ENCODE measurements at regions of chr12 and their contacts with region 1.

Region 1: DNA sequence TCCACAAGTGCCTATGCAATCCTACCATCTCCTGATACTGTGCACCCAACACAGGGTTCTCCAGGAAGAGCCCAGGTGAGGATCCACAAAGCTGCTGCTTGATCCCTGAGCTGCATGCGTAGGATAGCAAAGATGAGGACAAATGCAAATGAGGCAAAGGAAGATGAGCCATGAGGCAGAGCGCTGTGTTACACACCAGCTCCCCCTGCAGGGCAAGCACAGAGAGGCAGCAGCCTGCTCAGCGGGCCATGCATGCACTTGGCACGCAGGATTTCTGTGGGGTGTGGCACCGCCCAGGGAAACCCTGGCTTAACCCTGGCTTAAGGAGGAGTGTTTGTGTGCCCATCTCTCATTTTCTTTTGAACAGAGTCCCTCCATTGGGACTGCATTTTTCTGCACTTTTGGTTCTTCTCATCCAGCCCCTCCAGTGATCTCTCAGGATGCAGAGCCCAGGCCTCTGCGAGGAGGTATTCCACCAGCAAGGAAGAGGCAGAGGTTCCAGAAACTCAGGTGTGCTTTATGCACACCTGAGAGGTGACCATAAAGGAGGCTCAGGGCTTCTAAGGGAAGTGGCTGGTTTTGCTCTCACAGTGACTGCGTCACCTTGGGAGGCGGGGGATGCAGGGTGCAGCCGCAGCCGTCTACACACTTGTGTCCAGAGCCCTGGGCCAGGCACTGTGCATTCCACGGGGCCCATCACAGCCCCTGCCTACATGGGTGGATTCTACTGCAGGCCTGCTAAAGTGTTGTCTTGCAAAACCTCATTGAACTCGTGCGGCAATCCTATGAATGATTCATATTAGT is 973.3 kb upstream of the TMEM132C start:
- DNase-seq: peak in 6 of 9 donors; percentile 5 to 44 (median 10)
- ATAC-seq: peak; percentile 56
- H3K4me3 ChIP-seq: no peak overlapping the region
- H3K4me3 Mint-ChIP-seq: no peak overlapping the region
- H3K27ac ChIP-seq: no peak overlapping the region
- H3K27ac Mint-ChIP-seq: no peak overlapping the region
- H3K4me1 ChIP-seq: no peaks in the 10 kb centered on the region
- H3K4me1 Mint-ChIP-seq: no peaks in the 10 kb centered on the region
- H3K27me3 ChIP-seq: no peaks in the 10 kb centered on the region
- H3K27me3 Mint-ChIP-seq: peaks cover 0 to 29% (median 3%) of the 10 kb centered on the region in 5 donors

Region 2: DNA sequence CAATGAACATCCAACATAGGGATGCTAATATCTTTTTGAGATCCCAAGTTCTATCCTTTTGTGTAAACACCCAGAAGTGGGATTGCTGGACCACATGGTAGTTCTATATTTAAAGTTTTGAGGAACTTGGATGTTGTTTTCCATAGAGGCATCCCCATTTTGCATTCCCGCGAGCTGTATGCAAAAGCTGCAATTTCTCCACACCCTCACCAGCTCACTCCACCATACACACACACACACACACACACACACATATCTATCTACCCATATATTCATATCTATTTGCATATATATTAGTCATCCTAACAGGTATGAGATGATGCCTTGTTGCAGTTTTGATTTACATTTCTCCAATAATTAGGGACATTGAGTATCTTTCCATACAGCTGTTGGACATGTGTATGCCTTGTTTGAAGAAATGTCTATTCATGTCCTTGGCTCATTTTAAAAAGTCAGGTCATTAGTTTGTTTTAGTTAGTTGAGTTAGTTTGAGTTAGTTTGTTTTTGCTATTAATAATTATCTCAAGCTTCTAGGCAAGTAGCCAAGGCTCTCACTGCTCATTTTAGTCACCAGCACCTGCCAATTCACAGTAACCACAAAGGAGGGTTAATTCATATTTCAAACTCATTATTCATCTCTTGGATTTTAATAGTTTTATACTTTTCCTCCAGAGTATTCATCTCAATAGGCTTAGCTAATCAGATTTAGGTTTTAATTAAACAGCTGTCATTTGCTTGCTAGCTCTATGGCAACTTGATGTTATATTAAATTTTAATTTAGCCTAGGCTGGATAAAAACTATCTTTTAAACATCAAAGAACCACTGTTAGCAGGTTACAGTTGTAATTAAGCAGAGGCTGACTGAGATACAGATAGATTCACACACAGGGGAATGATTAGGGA is 462.7 kb before region 1 on chr12:
- CTCF ChIA-PET with region 1: no interaction called
- POLR2A ChIA-PET with region 1: no interaction called
- intact Hi-C with region 1: no loop called
- DNase-seq: no peak
- ATAC-seq: no peak
- H3K4me3 ChIP-seq: no peak overlapping the region
- H3K4me3 Mint-ChIP-seq: no peak overlapping the region
- H3K27ac ChIP-seq: no peak overlapping the region
- H3K27ac Mint-ChIP-seq: no peak overlapping the region
- H3K4me1 ChIP-seq: no peaks in the 10 kb centered on the region
- H3K4me1 Mint-ChIP-seq: peaks cover 0 to 2% (median 0%) of the 10 kb centered on the region in 7 donors
- H3K27me3 ChIP-seq: peaks cover 0 to 2% of the 10 kb centered on the region in 2 donors
- H3K27me3 Mint-ChIP-seq: peaks cover 2 to 28% (median 22%) of the 10 kb centered on the region in 5 donors

Region 3: DNA sequence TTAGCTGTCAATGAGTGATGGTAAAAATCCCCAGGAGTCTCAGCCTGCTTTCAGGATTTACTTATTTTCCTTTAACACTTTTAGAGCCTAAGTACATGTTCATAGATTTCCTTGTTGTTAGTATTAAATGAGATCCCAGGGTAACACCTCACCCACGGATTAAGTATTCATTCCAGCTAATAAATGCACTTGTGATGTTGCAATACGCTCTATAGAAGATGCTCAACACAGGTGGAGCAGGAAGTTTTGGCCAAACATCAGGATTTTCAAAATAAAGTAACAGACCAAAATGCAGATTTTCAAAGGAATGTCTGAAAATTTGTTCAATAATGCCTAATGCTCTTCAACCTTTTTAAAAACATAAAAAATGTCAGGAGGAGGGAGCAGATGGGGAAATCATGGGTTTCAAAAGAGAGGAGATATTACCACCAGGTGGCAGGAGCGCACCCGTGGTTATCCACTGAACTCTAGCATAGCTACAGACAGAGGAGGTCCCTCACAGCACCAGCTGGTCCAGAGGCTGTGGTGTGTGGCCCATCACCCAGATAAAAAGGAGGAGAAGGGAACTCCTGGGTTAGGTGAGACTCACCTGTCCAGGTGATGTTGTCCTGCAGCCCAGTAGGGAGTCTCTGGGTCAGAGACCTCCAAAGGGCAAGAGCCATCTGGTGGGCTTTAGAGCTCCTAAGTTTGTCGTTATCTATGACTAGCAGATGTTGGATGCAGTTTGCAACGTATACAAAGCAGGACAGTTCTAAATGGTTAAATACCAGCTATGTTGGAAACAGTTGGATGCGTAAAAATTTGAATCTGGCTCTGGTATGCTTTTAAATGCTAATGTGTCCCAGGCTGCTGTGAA is 185.1 kb before region 1 on chr12:
- CTCF ChIA-PET with region 1: interaction called, 11 read pairs
- POLR2A ChIA-PET with region 1: no interaction called
- intact Hi-C with region 1: loop called in 1 of 2 experiments (anchors 1 kb)
- DNase-seq: peak in 6 of 9 donors; percentile 7 to 35 (median 32)
- ATAC-seq: peak; percentile 45
- H3K4me3 ChIP-seq: no peak overlapping the region
- H3K4me3 Mint-ChIP-seq: no peak overlapping the region
- H3K27ac ChIP-seq: no peak overlapping the region
- H3K27ac Mint-ChIP-seq: peak overlapping the region in 1 of 9 donors; percentile 12
- H3K4me1 ChIP-seq: no peaks in the 10 kb centered on the region
- H3K4me1 Mint-ChIP-seq: no peaks in the 10 kb centered on the region
- H3K27me3 ChIP-seq: no peaks in the 10 kb centered on the region
- H3K27me3 Mint-ChIP-seq: peaks cover 5 to 56% (median 30%) of the 10 kb centered on the region in 5 donors

Region 4: DNA sequence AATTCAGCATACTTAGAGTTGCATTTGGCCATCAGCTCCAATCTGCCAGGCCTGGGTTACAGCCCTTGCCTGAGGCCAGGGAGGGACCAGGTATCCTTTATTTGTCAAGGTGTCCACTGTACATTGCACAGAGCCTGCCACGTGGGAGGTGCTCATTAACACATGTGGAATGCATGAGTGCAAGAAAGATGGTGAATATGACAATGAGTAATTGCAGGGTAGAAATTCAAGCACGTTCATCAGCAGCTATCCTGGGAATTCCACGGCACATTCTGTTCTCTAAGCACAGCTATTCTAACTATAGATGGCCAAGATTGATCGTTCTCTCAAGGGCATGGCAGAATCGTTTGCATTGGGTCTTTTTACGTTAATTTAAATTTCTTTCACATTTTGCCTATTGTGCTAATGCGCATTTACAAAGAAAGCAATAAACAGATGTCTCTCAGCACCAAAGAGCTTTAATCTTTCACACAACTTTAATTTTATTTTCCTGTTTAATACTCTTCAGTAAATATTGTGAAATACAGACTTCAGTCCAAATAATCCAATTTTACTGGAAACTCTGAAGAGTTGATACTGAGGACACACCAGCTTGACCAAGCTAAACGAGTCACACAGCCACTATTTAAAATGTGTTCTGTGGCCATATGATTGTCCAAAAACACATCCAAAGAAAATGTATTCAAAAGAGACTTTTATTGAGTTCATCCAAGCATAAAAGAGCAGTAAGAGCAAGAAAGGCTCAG is 52.5 kb before region 1 on chr12:
- CTCF ChIA-PET with region 1: no interaction called
- POLR2A ChIA-PET with region 1: no interaction called
- intact Hi-C with region 1: no loop called
- DNase-seq: no peak
- ATAC-seq: no peak
- H3K4me3 ChIP-seq: no peak overlapping the region
- H3K4me3 Mint-ChIP-seq: no peak overlapping the region
- H3K27ac ChIP-seq: no peak overlapping the region
- H3K27ac Mint-ChIP-seq: no peak overlapping the region
- H3K4me1 ChIP-seq: no peaks in the 10 kb centered on the region
- H3K4me1 Mint-ChIP-seq: no peaks in the 10 kb centered on the region
- H3K27me3 ChIP-seq: no peaks in the 10 kb centered on the region
- H3K27me3 Mint-ChIP-seq: peaks cover 0 to 23% (median 11%) of the 10 kb centered on the region in 5 donors